Activated CD4-positive, alpha-beta T cell treated with anti-CD3 and anti-CD28 coated beads, Interleukin-2, amount 10 ng/mL, durations not matched to agents 24 days and 14 days (primary cell): ENCODE measurements at regions of chr12 and their contacts with region 1.

Region 1: DNA sequence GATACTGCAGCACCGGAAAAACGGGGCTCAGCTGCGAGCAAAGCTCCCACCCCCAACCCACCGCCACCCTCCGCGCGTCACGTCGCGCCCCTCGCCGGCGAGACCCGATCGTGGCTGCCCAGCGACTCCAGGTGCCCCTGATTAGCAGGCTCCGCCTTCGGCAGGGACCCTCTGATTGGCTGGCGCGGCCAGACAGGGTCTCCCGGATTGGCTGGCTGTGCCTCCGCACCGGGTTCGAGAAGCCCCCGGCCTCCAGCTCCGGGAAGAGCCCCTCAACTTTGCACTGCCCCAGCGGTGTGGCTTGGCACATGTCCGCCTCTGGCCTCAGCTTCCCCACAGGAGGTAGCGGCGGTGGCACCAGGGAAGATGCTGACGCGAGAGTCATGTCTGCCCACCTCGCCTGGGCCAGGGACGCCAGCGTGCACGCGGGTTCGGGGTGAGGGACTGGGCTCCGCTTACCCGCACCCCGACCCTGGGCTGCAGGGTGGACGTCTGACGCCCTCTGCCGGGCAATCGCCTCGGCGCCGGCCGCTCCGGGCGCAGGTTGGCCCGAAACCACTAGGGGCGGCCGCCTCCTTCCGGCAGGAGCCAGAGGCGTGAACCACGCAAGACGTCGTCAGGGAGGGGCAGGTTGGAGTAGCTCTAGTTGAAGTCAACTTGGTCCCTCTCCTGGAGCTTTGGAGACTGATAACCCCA is 498 bp upstream of the RHOF start:
- DNase-seq: peak; percentile 99
- H3K4me3 Mint-ChIP-seq: peak overlapping the region; percentile 94
- H3K27ac Mint-ChIP-seq: peak overlapping the region; percentile 92
- H3K4me1 Mint-ChIP-seq: peaks cover 55% of the 10 kb centered on the region
- H3K27me3 Mint-ChIP-seq: no peaks in the 10 kb centered on the region

Region 2: GRCh38 chr12:121620328-121620891 is 173.6 kb before region 1 on chr12:
- intact Hi-C with region 1: no loop called
- DNase-seq: no peak
- H3K4me3 Mint-ChIP-seq: no peak overlapping the region
- H3K27ac Mint-ChIP-seq: no peak overlapping the region
- H3K4me1 Mint-ChIP-seq: peaks cover 9% of the 10 kb centered on the region
- H3K27me3 Mint-ChIP-seq: no peaks in the 10 kb centered on the region

Region 3: GRCh38 chr12:121688966-121689365 is 105.0 kb before region 1 on chr12:
- intact Hi-C with region 1: loop called (anchors 2 kb)
- DNase-seq: no peak
- H3K4me3 Mint-ChIP-seq: no peak overlapping the region
- H3K27ac Mint-ChIP-seq: peak overlapping the region; percentile 34
- H3K4me1 Mint-ChIP-seq: peaks cover 4% of the 10 kb centered on the region
- H3K27me3 Mint-ChIP-seq: peaks cover 6% of the 10 kb centered on the region

Region 4: DNA sequence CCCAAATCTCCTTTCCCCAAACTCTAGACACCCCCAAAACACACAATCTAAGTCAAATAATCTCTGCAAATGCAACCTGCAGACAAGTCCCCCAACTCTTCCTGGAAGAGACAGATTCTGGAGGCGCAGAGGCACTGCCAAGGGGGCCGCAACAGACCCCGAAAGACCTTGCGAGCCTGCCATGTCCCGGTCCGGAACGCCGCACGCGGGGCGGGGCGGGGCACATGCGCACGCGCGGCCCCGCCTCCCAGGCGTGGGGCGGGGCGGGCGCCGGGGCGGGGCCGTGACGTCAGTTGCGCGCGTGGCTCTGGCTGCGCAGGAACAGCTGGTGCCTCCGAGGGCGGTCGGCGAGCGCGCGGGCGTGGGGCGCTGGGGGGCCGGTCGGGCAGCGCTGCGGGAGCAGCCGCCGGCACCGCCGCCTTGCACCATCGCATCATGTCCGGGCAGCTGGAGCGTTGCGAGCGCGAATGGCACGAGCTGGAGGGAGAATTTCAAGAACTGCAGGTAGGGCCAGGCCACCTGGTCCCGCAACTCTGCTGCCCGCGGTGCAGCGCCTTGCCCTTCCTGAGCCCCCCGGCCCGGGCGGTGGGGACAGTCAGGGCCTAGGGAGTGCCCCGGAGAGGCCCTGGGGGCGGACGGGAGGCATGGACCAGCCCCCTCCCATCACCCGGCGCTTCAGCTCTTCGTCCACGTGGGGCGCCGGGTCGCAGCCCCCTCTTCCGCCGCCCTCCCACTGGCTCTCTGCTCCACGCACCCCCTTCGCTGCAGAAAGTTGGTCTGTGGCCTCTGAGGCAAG is 81.3 kb before region 1 on chr12 and contains the start of gene TMEM120B:
- intact Hi-C with region 1: loop called (anchors 5 kb)
- DNase-seq: peak; percentile 96
- H3K4me3 Mint-ChIP-seq: peak within 1 kb of the TSS; percentile 90
- H3K27ac Mint-ChIP-seq: peak within 1 kb of the TSS; percentile 96
- H3K4me1 Mint-ChIP-seq: peaks cover 25% of the 10 kb centered on the region
- H3K27me3 Mint-ChIP-seq: no peaks in the 10 kb centered on the region
- total RNA-seq, gene TMEM120B: 17.1 and 18.4 TPM in 2 replicates

Region 5: GRCh38 chr12:121748571-121749253 is 45.3 kb before region 1 on chr12:
- intact Hi-C with region 1: no loop called
- DNase-seq: peak; percentile 61
- H3K4me3 Mint-ChIP-seq: no peak overlapping the region
- H3K27ac Mint-ChIP-seq: peak overlapping the region; percentile 59
- H3K4me1 Mint-ChIP-seq: peaks cover 8% of the 10 kb centered on the region
- H3K27me3 Mint-ChIP-seq: no peaks in the 10 kb centered on the region

Region 6: GRCh38 chr12:121781998-121782979 is 11.7 kb before region 1 on chr12:
- intact Hi-C with region 1: loop called (anchors 1 kb)
- DNase-seq: peak; percentile 81
- H3K4me3 Mint-ChIP-seq: peak overlapping the region; percentile 79
- H3K27ac Mint-ChIP-seq: peak overlapping the region; percentile 93
- H3K4me1 Mint-ChIP-seq: peaks cover 47% of the 10 kb centered on the region
- H3K27me3 Mint-ChIP-seq: no peaks in the 10 kb centered on the region

Region 7: GRCh38 chr12:121839106-121839992 is 45.4 kb after region 1 on chr12:
- intact Hi-C with region 1: loop called (anchors 2 kb)
- DNase-seq: peak; percentile 100
- H3K4me3 Mint-ChIP-seq: peak overlapping the region; percentile 95
- H3K27ac Mint-ChIP-seq: peak overlapping the region; percentile 87
- H3K4me1 Mint-ChIP-seq: peaks cover 13% of the 10 kb centered on the region
- H3K27me3 Mint-ChIP-seq: no peaks in the 10 kb centered on the region

Region 8: DNA sequence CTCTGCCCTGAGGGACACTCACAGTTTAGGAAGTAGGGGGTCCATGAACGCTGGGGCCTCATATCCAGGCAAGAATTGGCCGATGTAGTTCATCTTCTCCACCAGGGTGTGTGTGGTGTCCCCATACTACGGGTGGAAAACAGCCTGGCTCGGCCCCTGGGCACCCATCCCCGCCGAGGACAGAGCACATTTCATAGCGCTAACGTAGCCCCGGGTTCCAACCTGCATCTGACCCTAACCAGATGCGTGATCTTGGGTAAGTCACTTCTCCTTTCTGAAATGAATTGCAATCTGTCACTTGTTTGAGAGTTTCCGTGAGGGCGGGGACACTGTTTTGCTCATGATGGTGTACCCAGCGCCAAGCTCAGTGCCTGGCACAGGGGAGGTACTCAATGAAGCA is 55.7 kb after region 1 on chr12:
- intact Hi-C with region 1: no loop called
- DNase-seq: no peak
- H3K4me3 Mint-ChIP-seq: no peak overlapping the region
- H3K27ac Mint-ChIP-seq: peak overlapping the region; percentile 69
- H3K4me1 Mint-ChIP-seq: peaks cover 2% of the 10 kb centered on the region
- H3K27me3 Mint-ChIP-seq: no peaks in the 10 kb centered on the region